PC-9 (cell line): ENCODE measurements at regions of chr2 and their contacts with region 1.

Region 1: GRCh38 chr2:233443468-233444183 is 89.3 kb downstream of the DGKD start:
- DNase-seq: peak; percentile 70 to 85
- H3K4me3 ChIP-seq: no peak overlapping the region
- H3K27ac ChIP-seq: no peak overlapping the region
- H3K4me1 ChIP-seq: no peaks in the 10 kb centered on the region
- H3K27me3 ChIP-seq: no peaks in the 10 kb centered on the region
- CTCF ChIP-seq: peak; percentile 97

Region 2: GRCh38 chr2:232611551-232612218 is 831.9 kb before region 1 on chr2:
- CTCF ChIA-PET with region 1: no interaction called
- POLR2A ChIA-PET with region 1: no interaction called
- intact Hi-C with region 1: loop called (anchors 2 kb)
- DNase-seq: peak; percentile 94 to 97
- H3K4me3 ChIP-seq: no peak overlapping the region
- H3K27ac ChIP-seq: peak overlapping the region; percentile 25
- H3K4me1 ChIP-seq: peaks cover 46% of the 10 kb centered on the region
- H3K27me3 ChIP-seq: no peaks in the 10 kb centered on the region
- CTCF ChIP-seq: peak; percentile 98

Region 3: GRCh38 chr2:233280114-233280693 is 163.4 kb before region 1 on chr2:
- CTCF ChIA-PET with region 1: no interaction called
- POLR2A ChIA-PET with region 1: interaction called, 4 read pairs
- intact Hi-C with region 1: loop called (anchors 5 kb)
- DNase-seq: peak; percentile 28 to 49
- H3K4me3 ChIP-seq: no peak overlapping the region
- H3K27ac ChIP-seq: peak overlapping the region; percentile 7; the same call in 1 of the 2 replicates
- H3K4me1 ChIP-seq: peaks cover 12% of the 10 kb centered on the region; the same call in 1 of the 2 replicates
- H3K27me3 ChIP-seq: no peaks in the 10 kb centered on the region
- CTCF ChIP-seq: no peak

Region 4: DNA sequence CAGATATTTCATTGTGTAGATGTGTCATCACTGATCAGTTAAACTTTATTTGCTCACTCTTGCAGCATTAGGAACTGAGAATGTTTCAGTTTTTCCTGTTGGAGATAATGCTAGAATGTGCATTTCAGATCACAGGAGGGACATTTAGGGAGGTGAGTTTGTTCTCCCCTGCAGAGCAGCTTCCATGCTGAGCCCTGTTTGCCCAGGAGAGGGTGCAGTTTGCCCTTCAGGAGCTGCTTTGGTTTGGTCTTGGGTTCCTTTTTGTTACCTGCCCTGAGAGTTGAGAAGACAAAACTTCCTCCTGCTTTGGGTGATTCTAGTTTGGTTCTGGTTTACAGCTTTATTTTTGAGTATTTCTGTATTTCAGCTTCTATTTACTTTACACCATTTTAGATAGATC is 39.4 kb before region 1 on chr2:
- CTCF ChIA-PET with region 1: interaction called, 16 read pairs
- POLR2A ChIA-PET with region 1: no interaction called
- intact Hi-C with region 1: loop called (anchors 1 kb)
- DNase-seq: peak; percentile 62 to 68
- H3K4me3 ChIP-seq: no peak overlapping the region
- H3K27ac ChIP-seq: no peak overlapping the region
- H3K4me1 ChIP-seq: no peaks in the 10 kb centered on the region
- H3K27me3 ChIP-seq: no peaks in the 10 kb centered on the region
- CTCF ChIP-seq: peak; percentile 84

Region 5: DNA sequence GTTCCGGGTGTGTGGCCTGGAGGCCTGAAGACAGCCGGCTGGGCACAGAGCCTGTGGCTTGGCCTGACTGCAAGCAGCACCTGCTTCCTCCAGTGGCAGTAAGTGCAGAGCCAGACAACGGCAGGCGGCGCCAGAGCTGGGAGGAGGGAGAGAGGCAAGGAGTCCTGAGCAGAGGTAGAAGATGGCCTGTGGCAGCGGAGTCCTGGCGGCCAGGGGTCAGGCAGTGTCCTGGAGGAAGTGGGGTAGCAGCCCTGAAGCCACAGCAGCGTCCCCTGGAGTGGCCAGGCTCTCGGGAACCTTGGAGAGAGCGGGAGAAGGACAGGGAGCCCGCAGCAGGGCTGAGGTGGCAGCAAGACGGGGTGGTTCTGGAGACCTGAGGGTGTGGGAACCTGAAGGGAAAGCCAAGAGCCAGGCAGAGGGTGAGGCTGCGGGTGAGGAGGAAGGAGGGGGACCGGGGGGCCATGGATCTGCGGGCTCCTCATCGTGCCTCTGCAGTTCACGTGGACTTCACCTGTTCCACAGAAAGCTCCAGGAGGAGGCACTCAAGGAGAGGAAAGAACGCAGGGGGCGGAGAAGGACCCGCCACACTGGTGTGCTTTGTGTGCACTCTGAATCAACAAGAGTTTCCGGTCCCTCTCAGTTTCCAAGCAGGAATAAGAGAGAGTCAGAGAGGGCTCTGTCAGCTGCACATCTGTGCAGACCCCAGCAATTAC is 37.0 kb after region 1 on chr2:
- CTCF ChIA-PET with region 1: no interaction called
- POLR2A ChIA-PET with region 1: no interaction called
- intact Hi-C with region 1: no loop called
- DNase-seq: peak in 1 of 2 experiments; percentile 33
- H3K4me3 ChIP-seq: no peak overlapping the region
- H3K27ac ChIP-seq: no peak overlapping the region
- H3K4me1 ChIP-seq: peaks cover 12% of the 10 kb centered on the region
- H3K27me3 ChIP-seq: no peaks in the 10 kb centered on the region
- CTCF ChIP-seq: no peak

Region 6: GRCh38 chr2:233832869-233833311 is 389.3 kb after region 1 on chr2:
- CTCF ChIA-PET with region 1: interaction called, 10 read pairs
- POLR2A ChIA-PET with region 1: no interaction called
- intact Hi-C with region 1: loop called (anchors 1 kb)
- DNase-seq: peak; percentile 77 to 83
- H3K4me3 ChIP-seq: no peak overlapping the region
- H3K27ac ChIP-seq: no peak overlapping the region
- H3K4me1 ChIP-seq: no peaks in the 10 kb centered on the region
- H3K27me3 ChIP-seq: no peaks in the 10 kb centered on the region
- CTCF ChIP-seq: peak; percentile 74